ENCODE measurements at regions of chr10 and their contacts with region 1.

Region 1: GRCh38 chr10:45235798-45236231 is 79.6 kb downstream of the OR13A1 start:
- DNase-seq: no peak
- ATAC-seq: peak; percentile 18
- H3K4me3 ChIP-seq: no peak overlapping the region
- H3K27ac ChIP-seq: no peak overlapping the region
- H3K4me1 ChIP-seq: peaks cover 0 to 5% of the 10 kb centered on the region in 2 experiments; a peak in 2 of 4 replicates
- H3K27me3 ChIP-seq: no peaks in the 10 kb centered on the region
- CTCF ChIP-seq: no peak
- POLR2A ChIP-seq: no peak
- RAD21 ChIP-seq: no peak

Region 2: DNA sequence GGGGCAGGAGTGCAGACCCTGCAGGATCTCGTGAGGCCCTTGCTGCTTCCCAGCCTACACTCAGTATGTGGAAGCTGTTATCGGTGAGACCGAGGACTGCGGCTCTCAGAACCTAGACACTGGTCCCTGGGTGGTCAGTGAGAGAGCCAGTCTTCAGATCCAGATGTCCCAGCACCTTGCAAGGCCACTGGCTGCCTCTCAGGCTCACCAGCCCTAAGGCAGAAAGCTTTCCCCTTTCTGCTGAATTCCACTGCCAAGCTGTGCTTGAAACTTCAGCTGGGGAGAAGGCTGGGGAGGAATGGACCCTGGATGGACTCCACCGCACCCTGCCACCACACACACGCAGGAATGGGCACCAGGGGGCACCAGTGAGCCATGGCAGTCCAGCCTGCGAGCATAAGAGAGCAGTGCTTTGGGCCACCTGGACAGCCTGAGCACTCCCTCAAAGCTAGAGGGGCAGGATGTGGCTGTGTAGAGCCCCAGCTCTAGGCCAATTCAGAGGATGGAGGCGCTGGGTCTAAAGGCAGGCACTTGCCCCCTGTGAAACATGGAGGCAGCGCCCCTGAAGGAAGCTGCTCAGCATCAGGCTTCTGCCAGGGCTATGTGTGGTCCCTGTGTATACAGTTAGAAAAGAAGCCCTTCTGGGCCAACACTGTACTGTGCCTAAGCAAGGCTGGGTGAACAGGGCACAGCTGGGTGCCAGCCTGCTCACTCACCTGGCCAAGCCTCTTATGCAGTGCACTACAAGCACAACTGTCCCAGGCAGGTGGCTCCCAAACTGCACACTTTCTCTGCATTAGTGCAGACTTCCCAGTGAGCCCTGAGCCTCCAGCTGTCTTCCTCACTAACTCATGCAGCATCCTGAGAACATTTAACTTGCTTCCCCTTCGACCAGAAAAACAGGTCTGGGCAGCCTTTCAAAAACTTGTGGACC is 303.0 kb before region 1 on chr10:
- CTCF ChIA-PET with region 1: interaction called, 6 read pairs
- POLR2A ChIA-PET with region 1: no interaction called
- RAD21 ChIA-PET with region 1: interaction called in 1 of 2 experiments, 5 read pairs
- intact Hi-C with region 1: loop called (anchors 10 kb)
- DNase-seq: peak; percentile 56
- ATAC-seq: peak; percentile 99
- H3K4me3 ChIP-seq: no peak overlapping the region
- H3K27ac ChIP-seq: no peak overlapping the region
- H3K4me1 ChIP-seq: no peaks in the 10 kb centered on the region
- H3K27me3 ChIP-seq: no peaks in the 10 kb centered on the region
- CTCF ChIP-seq: peak; percentile 87 to 99 (median 96)
- POLR2A ChIP-seq: no peak
- RAD21 ChIP-seq: peak; percentile 94

Region 3: DNA sequence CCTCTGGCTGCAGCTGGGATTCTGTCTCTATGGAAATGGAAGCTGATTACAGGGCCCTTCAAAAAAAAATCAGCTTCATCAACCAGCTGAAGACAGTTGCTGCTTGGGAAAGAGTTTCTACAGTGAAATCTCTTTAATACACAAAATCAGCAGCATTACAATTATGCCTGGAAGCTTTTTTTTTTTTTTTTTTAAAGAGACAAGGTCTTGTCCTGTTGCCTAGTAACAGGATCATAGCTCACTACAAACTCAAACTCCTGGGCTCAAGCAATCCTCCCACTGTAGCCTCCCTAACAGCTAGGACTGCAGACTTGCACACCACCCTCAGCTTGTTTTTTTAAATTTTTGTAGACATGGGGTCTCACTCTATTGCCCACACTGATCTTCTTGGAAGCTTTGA is 14.9 kb before region 1 on chr10:
- CTCF ChIA-PET with region 1: interaction called, 16 read pairs
- POLR2A ChIA-PET with region 1: no interaction called
- RAD21 ChIA-PET with region 1: no interaction called
- intact Hi-C with region 1: no loop called
- DNase-seq: no peak
- ATAC-seq: no peak
- H3K4me3 ChIP-seq: no peak overlapping the region
- H3K27ac ChIP-seq: no peak overlapping the region
- H3K4me1 ChIP-seq: no peaks in the 10 kb centered on the region
- H3K27me3 ChIP-seq: peaks cover 9% of the 10 kb centered on the region; the same call in 1 of the 2 replicates
- CTCF ChIP-seq: no peak
- POLR2A ChIP-seq: no peak
- RAD21 ChIP-seq: no peak

Region 4: DNA sequence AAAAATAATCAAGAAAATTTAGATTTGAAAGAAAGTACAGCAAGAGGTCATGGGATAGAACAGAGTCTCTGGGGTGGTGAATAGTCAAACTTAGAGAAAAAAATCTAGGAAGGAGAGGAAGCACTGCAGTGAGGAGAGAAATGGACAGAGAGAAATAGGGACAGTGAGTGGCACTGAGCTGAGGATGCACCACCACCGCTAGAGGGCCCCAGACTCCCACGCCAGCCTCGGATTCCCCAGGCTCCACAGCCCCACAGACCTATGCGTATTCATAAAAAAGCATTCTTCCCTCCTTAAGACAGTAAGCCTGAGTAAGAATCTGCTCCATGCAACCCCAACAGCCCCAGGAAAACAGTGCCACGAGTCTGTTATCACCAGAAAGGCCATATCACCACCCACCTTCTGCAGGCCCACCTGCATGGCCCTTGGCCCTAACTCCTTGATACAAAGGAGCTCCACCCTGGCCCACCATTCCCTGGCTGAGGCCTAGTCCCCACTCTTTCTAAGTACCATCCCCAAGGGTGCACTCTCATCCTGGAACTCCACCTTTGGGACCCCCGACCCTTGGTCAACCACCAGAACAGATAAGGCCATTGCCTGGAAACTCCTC is 229.2 kb after region 1 on chr10:
- CTCF ChIA-PET with region 1: interaction called, 5 read pairs
- POLR2A ChIA-PET with region 1: no interaction called
- RAD21 ChIA-PET with region 1: no interaction called
- intact Hi-C with region 1: loop called (anchors 1 kb)
- DNase-seq: peak; percentile 19
- ATAC-seq: peak; percentile 99
- H3K4me3 ChIP-seq: no peak overlapping the region
- H3K27ac ChIP-seq: no peak overlapping the region
- H3K4me1 ChIP-seq: no peaks in the 10 kb centered on the region
- H3K27me3 ChIP-seq: no peaks in the 10 kb centered on the region
- CTCF ChIP-seq: peak; percentile 72 to 93 (median 91)
- POLR2A ChIP-seq: no peak
- RAD21 ChIP-seq: peak; percentile 88

Region 5: DNA sequence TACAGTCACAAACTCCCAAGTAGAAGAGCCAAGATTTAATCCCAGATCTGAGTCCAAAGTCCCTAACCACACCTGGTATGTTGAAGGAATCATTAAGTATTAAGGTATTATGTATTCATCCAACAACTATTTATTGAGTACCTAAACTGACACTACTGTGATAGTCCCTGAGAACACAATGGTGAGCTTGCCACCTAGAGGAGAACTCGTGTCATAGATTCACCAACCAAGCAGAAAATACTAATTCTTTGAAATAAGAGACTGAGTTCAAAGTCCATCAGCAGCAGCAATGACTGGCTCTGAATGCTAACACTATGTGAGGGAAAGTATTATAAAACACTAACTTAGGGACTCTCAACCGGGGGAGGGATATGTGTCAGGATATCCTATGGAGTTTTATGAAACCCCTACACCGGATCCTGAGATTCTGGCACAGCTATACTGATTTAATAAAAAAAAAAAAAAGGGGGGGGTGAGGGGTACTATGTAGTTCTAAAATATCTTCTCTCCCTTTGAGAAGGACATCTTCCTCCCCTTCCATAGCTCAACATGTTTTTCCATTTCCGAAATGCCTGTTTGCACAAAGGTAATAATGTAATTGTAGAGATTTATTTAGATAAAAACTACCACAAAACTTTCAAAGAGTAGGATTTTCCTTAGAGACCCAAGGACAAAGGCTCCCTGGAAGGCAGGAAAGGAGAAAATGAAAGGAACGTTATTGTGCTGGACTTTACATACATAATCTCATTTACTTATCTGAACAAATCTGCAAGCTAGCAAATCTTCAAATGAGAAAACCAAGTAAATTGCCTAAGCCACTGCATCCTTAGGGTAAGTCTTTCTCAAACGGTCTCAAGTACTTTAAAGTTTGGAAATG is 793.0 kb after region 1 on chr10:
- CTCF ChIA-PET with region 1: interaction called, 4 read pairs
- POLR2A ChIA-PET with region 1: no interaction called
- RAD21 ChIA-PET with region 1: no interaction called
- intact Hi-C with region 1: loop called (anchors 2 kb)
- DNase-seq: peak; percentile 71
- ATAC-seq: peak; percentile 49
- H3K4me3 ChIP-seq: peak overlapping the region; percentile 86
- H3K27ac ChIP-seq: peak overlapping the region; percentile 11; the same call in 1 of the 2 replicates
- H3K4me1 ChIP-seq: peaks cover 9 to 33% of the 10 kb centered on the region in 2 experiments; a peak in 3 of 4 replicates
- H3K27me3 ChIP-seq: no peaks in the 10 kb centered on the region
- CTCF ChIP-seq: peak; percentile 61 to 79 (median 65)
- POLR2A ChIP-seq: no peak
- RAD21 ChIP-seq: peak; percentile 83

Region 6: GRCh38 chr10:46255801-46256747 is 1020.3 kb after region 1 on chr10:
- CTCF ChIA-PET with region 1: no interaction called
- POLR2A ChIA-PET with region 1: no interaction called
- RAD21 ChIA-PET with region 1: no interaction called
- intact Hi-C with region 1: loop called (anchors 10 kb)
- DNase-seq: peak; percentile 54
- ATAC-seq: peak; percentile 100
- H3K4me3 ChIP-seq: no peak overlapping the region
- H3K27ac ChIP-seq: no peak overlapping the region
- H3K4me1 ChIP-seq: peaks cover 5 to 6% of the 10 kb centered on the region in 2 experiments; a peak in 2 of 4 replicates
- H3K27me3 ChIP-seq: no peaks in the 10 kb centered on the region
- CTCF ChIP-seq: peak; percentile 59 to 86 (median 75); a peak in 5 of 6 replicates
- POLR2A ChIP-seq: no peak
- RAD21 ChIP-seq: peak; percentile 68

Measured in HCT116 (cell line).